Posterior vena cava (tissue), 2 donors: ENCODE measurements at regions of chr13 and their contacts with region 1.

Region 1: GRCh38 chr13:49749848-49750247 is 42.6 kb downstream of the KPNA3 start:
- DNase-seq: no peak

Region 2: GRCh38 chr13:49711218-49711863 is 38.5 kb before region 1 on chr13:
- intact Hi-C with region 1: loop called in 1 of 2 experiments (anchors 1 kb)
- DNase-seq: no peak